ENCODE measurements at regions of chrX and their contacts with region 1.

Region 1: DNA sequence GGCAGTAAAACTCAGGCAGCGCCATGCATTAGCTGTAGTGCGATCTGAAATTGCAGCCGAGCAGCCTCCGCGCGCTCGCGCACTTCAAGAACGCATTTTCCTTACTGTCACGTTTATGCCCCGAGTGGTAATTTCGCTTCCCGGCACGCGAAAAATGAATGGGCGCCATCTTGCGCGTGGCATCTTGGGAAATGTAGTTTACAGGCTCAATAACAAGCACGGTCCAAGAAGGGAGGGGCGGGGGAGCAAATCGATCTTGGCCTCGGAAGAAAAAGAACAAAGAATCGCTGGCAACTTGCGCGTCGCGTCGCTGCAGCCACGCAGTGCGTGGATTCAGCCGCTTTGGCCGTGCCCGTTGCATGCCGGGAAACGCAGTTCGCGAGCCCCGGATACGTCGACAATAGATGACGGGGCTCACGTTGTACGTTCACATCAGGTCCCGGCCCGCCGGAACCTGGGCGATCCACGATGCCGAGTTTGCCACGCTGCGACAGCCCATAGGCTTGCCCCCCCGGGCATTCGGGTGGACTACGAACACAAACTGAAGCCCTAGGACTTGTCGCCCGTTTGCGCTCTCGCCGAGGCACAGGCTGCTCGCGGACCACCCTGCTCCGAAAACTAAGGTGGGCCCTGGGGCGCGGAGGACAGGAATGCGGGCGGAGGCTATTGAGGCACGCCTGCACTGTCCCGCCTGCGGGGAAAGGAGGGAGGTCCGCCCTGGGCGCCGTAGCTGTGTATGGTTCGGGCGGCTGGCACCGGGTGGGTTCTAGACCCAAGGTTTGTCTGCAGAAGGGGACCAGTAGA is at the start of gene FTSJ1:
- DNase-seq: peak; percentile 96
- H3K4me3 Mint-ChIP-seq: peak within 1 kb of the TSS; percentile 96
- H3K27ac Mint-ChIP-seq: peak within 1 kb of the TSS; percentile 93
- H3K4me1 Mint-ChIP-seq: peaks cover 28% of the 10 kb centered on the region
- H3K27me3 Mint-ChIP-seq: no peaks in the 10 kb centered on the region
- total RNA-seq, gene FTSJ1: 95.6 and 101 TPM in 2 replicates

Region 2: GRCh38 chrX:48521353-48522243 is 45.6 kb after region 1 on chrX and contains the start of gene EBP:
- intact Hi-C with region 1: loop called (anchors 1 kb)
- DNase-seq: peak; percentile 98
- H3K4me3 Mint-ChIP-seq: peak within 1 kb of the TSS; percentile 90
- H3K27ac Mint-ChIP-seq: peak within 1 kb of the TSS; percentile 94
- H3K4me1 Mint-ChIP-seq: peaks cover 21% of the 10 kb centered on the region
- H3K27me3 Mint-ChIP-seq: no peaks in the 10 kb centered on the region
- total RNA-seq, gene EBP: 159 and 163 TPM in 2 replicates

Region 3: GRCh38 chrX:48574270-48575266 is 98.6 kb after region 1 on chrX and contains the start of gene RBM3:
- intact Hi-C with region 1: loop called (anchors 1 kb)
- DNase-seq: peak; percentile 97
- H3K4me3 Mint-ChIP-seq: peak within 1 kb of the TSS; percentile 94
- H3K27ac Mint-ChIP-seq: peak within 1 kb of the TSS; percentile 100
- H3K4me1 Mint-ChIP-seq: peaks cover 14% of the 10 kb centered on the region
- H3K27me3 Mint-ChIP-seq: no peaks in the 10 kb centered on the region
- total RNA-seq, gene RBM3: 317 and 318 TPM in 2 replicates

Region 4: DNA sequence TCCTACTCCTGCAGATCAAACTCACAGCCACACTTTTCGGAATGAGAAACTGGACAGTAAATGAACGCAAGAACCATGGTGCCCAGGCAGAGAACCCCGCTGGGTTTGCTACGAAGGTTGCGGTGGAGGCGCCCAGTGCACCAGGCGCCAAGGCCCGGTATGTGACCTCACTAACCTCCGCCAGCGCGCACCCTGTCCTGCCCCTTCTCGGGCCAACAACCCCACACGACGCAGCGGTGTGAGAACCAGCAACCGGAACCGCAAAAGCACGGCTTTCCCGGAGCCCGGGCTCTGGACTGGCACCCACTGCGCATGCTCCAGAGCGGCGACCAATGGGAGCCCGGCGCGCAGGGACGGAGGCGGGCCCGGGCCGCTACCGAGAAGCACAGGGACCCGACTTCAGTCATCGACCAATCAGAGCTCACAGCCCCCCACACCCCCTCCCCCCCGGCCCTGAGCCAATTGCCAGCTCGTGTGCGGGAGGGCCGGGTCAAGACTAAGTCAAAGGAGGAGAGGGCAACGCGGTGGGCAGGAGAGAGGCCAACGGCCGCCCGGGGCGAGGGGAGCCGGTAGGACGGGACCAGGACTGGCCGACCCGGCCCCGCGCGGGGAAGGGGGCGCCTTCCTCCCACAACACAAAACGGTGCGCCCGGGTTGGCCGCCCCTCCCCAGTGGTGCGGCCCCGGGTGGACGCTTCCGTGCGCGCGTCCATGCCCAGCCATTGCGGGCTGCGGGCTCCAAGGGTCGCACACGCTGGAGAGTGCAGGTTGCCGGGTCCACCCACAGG is 200.3 kb after region 1 on chrX:
- intact Hi-C with region 1: loop called (anchors 5 kb)
- DNase-seq: peak; percentile 96
- H3K4me3 Mint-ChIP-seq: peak overlapping the region; percentile 95
- H3K27ac Mint-ChIP-seq: peak overlapping the region; percentile 93
- H3K4me1 Mint-ChIP-seq: peaks cover 14% of the 10 kb centered on the region
- H3K27me3 Mint-ChIP-seq: no peaks in the 10 kb centered on the region

Region 5: DNA sequence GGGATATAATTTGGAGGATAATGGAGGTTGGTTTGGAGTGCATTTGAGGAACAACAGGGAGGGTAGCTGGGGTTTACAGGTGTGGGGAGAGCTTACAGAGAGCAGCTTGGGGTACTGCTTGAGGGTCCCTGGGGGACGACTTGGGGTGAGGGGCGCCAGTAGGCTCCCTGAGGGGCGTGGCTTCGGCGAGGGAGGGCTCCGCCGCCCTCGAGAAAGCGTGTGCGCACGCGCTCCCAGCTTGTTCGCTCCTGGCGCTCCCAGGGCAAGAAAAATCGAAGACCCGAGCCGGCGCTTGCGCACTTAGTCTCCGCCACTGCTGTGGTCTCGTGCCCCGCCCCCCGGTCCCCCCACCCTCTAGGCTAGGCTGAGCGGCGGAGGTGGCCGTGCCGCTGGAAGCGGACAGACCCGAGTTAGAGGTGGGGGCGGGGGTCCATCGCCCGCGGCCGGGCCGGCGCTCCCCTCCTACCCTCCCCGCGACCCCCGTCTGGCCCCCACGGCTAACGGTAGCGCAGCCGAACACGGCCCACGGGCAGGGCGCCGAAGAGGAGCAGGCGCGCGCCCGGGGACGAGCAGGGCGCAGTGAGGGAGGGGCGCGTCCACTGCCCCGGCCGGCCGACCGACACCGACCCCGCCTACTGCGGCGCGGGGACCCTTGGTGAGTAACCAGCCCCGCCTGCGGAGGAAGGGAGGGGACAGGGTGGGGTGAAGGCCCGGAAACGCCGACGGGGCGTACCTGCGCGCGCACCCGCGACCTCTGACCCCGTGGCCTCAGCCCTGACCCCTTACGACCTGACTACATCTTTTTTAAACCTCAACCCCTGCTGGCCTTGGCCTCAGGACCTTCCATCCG is 577.5 kb after region 1 on chrX:
- intact Hi-C with region 1: loop called (anchors 5 kb)
- DNase-seq: peak; percentile 87
- H3K4me3 Mint-ChIP-seq: peak overlapping the region; percentile 81
- H3K27ac Mint-ChIP-seq: peak overlapping the region; percentile 83
- H3K4me1 Mint-ChIP-seq: peaks cover 22% of the 10 kb centered on the region
- H3K27me3 Mint-ChIP-seq: peaks cover 2% of the 10 kb centered on the region